ENCODE measurements at regions of chr9 and their contacts with region 1.

Region 1: DNA sequence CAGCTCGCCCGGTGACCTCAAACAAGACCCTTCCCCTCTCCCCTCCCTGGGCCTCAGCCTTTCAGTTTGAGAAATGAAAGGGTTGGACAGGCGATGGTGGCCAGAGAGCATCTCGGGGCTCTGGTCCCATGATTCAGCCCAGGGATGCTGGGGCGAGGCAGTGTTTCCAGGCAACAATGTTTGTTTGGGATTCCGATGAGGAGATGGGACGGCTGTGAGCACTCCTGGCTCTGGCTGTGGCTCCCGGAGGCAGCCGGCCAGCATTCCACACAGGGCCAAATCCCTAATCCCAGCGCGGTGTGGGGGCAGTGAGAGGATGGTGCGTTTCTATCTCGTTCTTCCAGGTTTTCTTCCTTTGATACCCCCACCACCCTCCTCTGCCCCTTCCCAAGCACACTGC is 66.0 kb downstream of the HMCN2 start:
- DNase-seq: no peak
- H3K4me3 ChIP-seq: no peak overlapping the region
- H3K27ac ChIP-seq: peak overlapping the region; percentile 71 to 90 (median 84)
- H3K4me1 ChIP-seq: peaks cover 12 to 59% (median 13%) of the 10 kb centered on the region in 3 donors
- H3K27me3 ChIP-seq: peaks cover 0 to 95% (median 3%) of the 10 kb centered on the region in 4 donors
- CTCF ChIP-seq: no peak
- POLR2A ChIP-seq: no peak

Region 2: GRCh38 chr9:130265431-130266235 is 65.9 kb before region 1 on chr9 and contains the start of gene HMCN2:
- intact Hi-C with region 1: loop called (anchors 10 kb)
- DNase-seq: no peak
- H3K4me3 ChIP-seq: peak within 1 kb of the TSS in 3 of 4 donors; percentile 32 to 65 (median 47)
- H3K27ac ChIP-seq: peak within 1 kb of the TSS; percentile 41 to 90 (median 82)
- H3K4me1 ChIP-seq: peaks cover 7 to 52% (median 17%) of the 10 kb centered on the region in 3 donors
- H3K27me3 ChIP-seq: peaks cover 0 to 83% (median 5%) of the 10 kb centered on the region in 4 donors
- CTCF ChIP-seq: no peak
- POLR2A ChIP-seq: no peak
- total RNA-seq, gene HMCN2: 0.53 to 4.8 (median 0.78) TPM

Region 3: DNA sequence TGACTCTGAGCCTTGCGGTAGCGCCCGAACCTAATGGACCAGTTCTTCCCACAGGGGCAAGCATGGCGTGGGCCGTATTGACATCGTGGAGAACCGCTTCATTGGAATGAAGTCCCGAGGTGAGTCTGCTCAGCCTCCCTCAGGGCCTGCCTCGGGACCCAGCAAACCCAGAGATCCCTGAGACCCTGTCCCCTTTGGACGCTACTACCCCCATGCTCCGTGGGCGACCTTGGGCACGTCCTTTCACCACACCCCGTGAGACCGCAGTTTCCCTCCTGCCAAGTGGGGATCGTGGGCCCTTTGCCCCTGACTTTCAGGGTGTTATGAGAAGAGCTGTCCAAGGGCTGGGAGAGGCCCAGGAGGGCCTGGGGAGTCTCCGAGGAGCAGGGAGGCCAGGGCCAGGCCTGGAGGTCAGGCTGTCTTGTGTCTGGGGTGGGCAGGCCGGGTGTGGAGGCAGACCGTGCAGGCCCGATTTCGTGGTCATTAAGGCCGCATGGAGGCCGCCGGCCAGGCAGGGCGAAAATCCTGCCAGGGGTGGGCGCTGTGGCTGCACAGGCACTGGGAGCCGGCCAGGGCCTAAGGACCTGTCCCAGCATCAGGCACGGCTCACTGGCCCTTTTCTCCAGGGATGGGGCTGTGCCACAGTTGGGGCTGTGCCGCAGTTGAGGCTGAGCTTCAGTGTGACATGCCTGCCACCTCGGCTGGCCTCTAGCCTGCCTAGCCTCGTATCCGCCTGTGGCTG is 148.9 kb after region 1 on chr9:
- intact Hi-C with region 1: no loop called
- DNase-seq: no peak
- H3K4me3 ChIP-seq: no peak overlapping the region
- H3K27ac ChIP-seq: no peak overlapping the region
- H3K4me1 ChIP-seq: no peaks in the 10 kb centered on the region
- H3K27me3 ChIP-seq: no peaks in the 10 kb centered on the region
- CTCF ChIP-seq: peak in 1 of 6 experiments; percentile 28
- POLR2A ChIP-seq: no peak

Region 4: DNA sequence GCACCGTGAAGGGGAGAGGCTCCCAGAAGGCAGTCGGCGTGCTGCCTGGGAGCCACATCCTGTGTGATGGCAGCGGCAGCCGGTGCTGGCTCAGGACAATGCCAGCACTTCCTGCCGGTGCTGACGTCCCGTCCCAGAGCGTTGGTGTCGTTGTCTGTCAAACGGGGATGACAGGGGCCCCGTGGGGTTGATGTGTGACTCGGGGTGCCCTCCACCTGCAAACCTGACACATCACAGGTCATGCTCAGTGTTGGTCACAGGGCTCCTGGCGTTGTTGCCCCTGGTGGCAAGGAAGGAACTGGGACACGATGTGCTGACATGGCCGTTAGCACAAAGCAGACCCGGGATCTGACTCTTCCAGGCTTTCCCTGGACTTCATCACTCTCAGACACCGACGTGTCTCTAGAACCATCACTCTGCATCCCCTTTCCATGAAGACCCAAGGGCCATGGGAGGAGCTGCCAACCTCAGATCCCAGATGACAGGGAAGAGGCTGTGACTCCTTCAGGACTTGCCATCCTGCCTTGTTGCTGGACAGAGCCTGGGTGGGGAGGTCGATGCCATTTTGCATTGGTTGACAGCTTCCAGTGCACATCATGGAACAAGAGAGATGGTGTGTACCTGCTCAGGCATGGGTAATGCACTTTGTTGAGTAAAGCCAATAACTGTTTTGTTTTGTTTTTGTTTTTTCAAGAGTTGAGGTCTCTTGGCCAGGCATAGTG is 979.4 kb after region 1 on chr9:
- intact Hi-C with region 1: no loop called
- DNase-seq: no peak
- H3K4me3 ChIP-seq: peak overlapping the region in 1 of 4 donors; percentile 28
- H3K27ac ChIP-seq: no peak overlapping the region
- H3K4me1 ChIP-seq: no peaks in the 10 kb centered on the region
- H3K27me3 ChIP-seq: peaks cover 0 to 5% (median 0%) of the 10 kb centered on the region in 4 donors
- CTCF ChIP-seq: no peak
- POLR2A ChIP-seq: no peak